CD4-positive, alpha-beta T cell (primary cell): ENCODE measurements at regions of chr7 and their contacts with region 1.

Region 1: GRCh38 chr7:152675759-152676636 is at the start of gene XRCC2:
- DNase-seq: peak; percentile 87 to 98 (median 95)
- ATAC-seq: peak; percentile 94
- H3K4me3 ChIP-seq: peak within 1 kb of the TSS; percentile 73
- H3K4me3 Mint-ChIP-seq: peak within 1 kb of the TSS; percentile 92
- H3K27ac ChIP-seq: peak within 1 kb of the TSS; percentile 13 to 83
- H3K27ac Mint-ChIP-seq: peak within 1 kb of the TSS; percentile 73
- H3K4me1 ChIP-seq: peaks cover 14% of the 10 kb centered on the region
- H3K4me1 Mint-ChIP-seq: peaks cover 10% of the 10 kb centered on the region
- H3K27me3 ChIP-seq: no peaks in the 10 kb centered on the region
- H3K27me3 Mint-ChIP-seq: no peaks in the 10 kb centered on the region
- CTCF ChIP-seq: no peak
- total RNA-seq, gene XRCC2: 0.25 to 0.41 TPM

Region 2: GRCh38 chr7:151341357-151342101 is 1334.5 kb before region 1 on chr7 and contains the start of gene NUB1:
- CTCF ChIA-PET with region 1: no interaction called
- POLR2A ChIA-PET with region 1: no interaction called
- intact Hi-C with region 1: loop called in 1 of 2 experiments (anchors 10 kb)
- DNase-seq: peak; percentile 81 to 98 (median 90)
- ATAC-seq: peak; percentile 90
- H3K4me3 ChIP-seq: peak within 1 kb of the TSS; percentile 88
- H3K4me3 Mint-ChIP-seq: peak within 1 kb of the TSS; percentile 93
- H3K27ac ChIP-seq: peak within 1 kb of the TSS; percentile 55 to 88
- H3K27ac Mint-ChIP-seq: peak within 1 kb of the TSS; percentile 92
- H3K4me1 ChIP-seq: peaks cover 34% of the 10 kb centered on the region
- H3K4me1 Mint-ChIP-seq: peaks cover 49% of the 10 kb centered on the region
- H3K27me3 ChIP-seq: no peaks in the 10 kb centered on the region
- H3K27me3 Mint-ChIP-seq: no peaks in the 10 kb centered on the region
- CTCF ChIP-seq: no peak
- total RNA-seq, gene NUB1: 86.0 to 90.4 TPM

Region 3: DNA sequence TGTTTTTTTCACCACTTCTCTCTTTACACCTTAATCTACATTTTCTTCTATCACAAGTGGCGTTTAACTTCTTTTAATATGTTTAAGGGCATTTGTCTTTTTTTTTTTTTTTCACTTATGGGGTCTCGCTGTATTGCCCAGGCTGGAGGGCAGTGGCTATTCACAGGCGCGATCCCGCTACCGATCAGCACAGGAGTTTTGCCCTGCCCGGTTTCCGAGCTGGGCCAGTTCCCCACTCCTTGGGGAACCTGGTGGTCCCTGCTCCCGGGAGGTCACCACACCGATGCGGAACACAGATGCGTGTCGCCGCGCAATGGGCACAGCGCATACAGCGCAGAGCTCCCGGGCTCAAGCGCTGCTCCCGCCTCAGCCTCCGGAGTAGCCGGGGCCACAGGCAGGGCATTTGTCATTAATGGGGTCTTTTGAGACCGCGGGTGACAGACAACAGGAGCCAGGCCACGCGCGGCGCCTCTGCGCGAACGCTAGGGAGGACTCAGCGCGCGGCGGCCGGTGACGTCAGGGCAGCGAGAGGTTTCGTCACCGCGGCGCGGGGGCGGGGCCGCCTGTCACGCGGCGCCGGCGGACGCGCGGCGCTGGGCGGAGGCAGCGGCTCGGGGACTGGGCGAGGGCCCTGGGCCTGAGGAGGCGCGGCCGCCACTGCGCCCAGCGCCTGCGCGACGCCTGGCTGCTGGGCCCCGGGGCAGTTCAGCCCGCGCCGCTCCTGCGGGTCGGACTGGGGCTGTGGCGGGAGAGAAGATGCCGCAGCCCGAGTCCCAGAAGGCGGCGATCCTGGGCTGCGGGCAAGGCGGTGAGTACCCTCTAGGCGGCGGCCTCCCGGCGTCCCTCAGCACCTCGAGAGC is 650.7 kb before region 1 on chr7 and contains the start of gene GALNT11:
- CTCF ChIA-PET with region 1: no interaction called
- POLR2A ChIA-PET with region 1: no interaction called
- intact Hi-C with region 1: loop called in 1 of 2 experiments (anchors 5 kb)
- DNase-seq: peak; percentile 72 to 96 (median 82)
- ATAC-seq: peak; percentile 92
- H3K4me3 ChIP-seq: peak within 1 kb of the TSS; percentile 96
- H3K4me3 Mint-ChIP-seq: peak within 1 kb of the TSS; percentile 96
- H3K27ac ChIP-seq: peak within 1 kb of the TSS in 1 of 2 donors; percentile 82
- H3K27ac Mint-ChIP-seq: peak within 1 kb of the TSS; percentile 96
- H3K4me1 ChIP-seq: peaks cover 30% of the 10 kb centered on the region
- H3K4me1 Mint-ChIP-seq: peaks cover 42% of the 10 kb centered on the region
- H3K27me3 ChIP-seq: no peaks in the 10 kb centered on the region
- H3K27me3 Mint-ChIP-seq: no peaks in the 10 kb centered on the region
- CTCF ChIP-seq: no peak
- total RNA-seq, gene GALNT11: 20.7 to 22.2 TPM

Region 4: GRCh38 chr7:152430854-152431253 is 245.1 kb before region 1 on chr7:
- CTCF ChIA-PET with region 1: no interaction called
- POLR2A ChIA-PET with region 1: no interaction called
- intact Hi-C with region 1: loop called (anchors 5 to 10 kb)
- DNase-seq: no peak
- ATAC-seq: no peak
- H3K4me3 ChIP-seq: no peak overlapping the region
- H3K4me3 Mint-ChIP-seq: peak overlapping the region; percentile 62
- H3K27ac ChIP-seq: no peak overlapping the region
- H3K27ac Mint-ChIP-seq: no peak overlapping the region
- H3K4me1 ChIP-seq: peaks cover 31% of the 10 kb centered on the region
- H3K4me1 Mint-ChIP-seq: peaks cover 56% of the 10 kb centered on the region
- H3K27me3 ChIP-seq: no peaks in the 10 kb centered on the region
- H3K27me3 Mint-ChIP-seq: no peaks in the 10 kb centered on the region
- CTCF ChIP-seq: no peak

Region 5: DNA sequence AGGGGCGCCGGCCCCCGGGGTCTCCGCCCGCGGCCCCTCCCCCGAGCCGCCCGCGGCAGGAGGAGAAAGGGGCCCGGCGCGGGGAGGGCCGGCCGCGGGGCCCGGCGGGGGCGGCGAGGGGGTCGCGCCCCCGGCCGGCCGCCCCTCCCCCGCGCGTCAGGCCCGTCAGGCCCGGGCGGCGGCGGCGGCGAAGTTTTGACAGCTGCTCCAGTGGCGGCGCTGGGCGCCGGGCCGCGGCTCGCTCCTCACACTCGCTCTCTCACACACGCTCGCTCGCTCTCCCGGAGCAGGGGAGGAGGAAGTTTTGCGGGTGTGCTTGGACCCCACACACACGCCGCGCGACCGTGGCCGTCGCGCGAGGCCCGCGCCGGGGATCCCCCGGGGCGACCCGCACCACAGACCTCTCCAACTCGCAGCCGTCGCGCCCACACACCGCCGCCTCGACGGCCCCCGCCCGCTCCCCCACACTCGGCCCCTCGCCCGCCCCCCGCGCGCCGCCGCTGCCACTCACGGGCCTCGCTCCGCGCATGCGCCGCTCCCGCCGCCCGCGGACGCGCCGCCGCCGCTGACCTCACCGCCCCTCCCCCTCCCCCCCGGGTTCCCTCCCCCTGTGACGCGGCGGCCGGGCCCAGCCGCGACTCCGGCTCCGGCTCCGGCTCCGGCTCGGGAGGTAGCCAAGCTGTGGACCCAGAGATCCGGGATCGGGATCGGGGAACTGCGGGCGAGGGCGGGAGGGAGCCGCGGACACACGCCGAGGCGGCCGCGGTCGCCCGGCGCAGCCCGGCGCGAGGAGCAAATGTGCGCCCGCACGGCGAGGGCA is 239.7 kb before region 1 on chr7:
- CTCF ChIA-PET with region 1: no interaction called
- POLR2A ChIA-PET with region 1: no interaction called
- intact Hi-C with region 1: loop called (anchors 5 to 10 kb)
- DNase-seq: peak; percentile 82 to 97 (median 88)
- ATAC-seq: peak; percentile 66
- H3K4me3 ChIP-seq: peak overlapping the region; percentile 62
- H3K4me3 Mint-ChIP-seq: peak overlapping the region; percentile 91
- H3K27ac ChIP-seq: peak overlapping the region; percentile 86 to 92
- H3K27ac Mint-ChIP-seq: peak overlapping the region; percentile 93
- H3K4me1 ChIP-seq: peaks cover 5% of the 10 kb centered on the region
- H3K4me1 Mint-ChIP-seq: peaks cover 29% of the 10 kb centered on the region
- H3K27me3 ChIP-seq: no peaks in the 10 kb centered on the region
- H3K27me3 Mint-ChIP-seq: no peaks in the 10 kb centered on the region
- CTCF ChIP-seq: no peak

Region 6: GRCh38 chr7:152463709-152464311 is 212.2 kb before region 1 on chr7:
- CTCF ChIA-PET with region 1: no interaction called
- POLR2A ChIA-PET with region 1: no interaction called
- intact Hi-C with region 1: loop called (anchors 2 to 10 kb)
- DNase-seq: peak; percentile 99 to 100 (median 100)
- ATAC-seq: peak; percentile 91
- H3K4me3 ChIP-seq: peak overlapping the region; percentile 93
- H3K4me3 Mint-ChIP-seq: peak overlapping the region; percentile 93
- H3K27ac ChIP-seq: peak overlapping the region; percentile 76 to 93
- H3K27ac Mint-ChIP-seq: peak overlapping the region; percentile 74
- H3K4me1 ChIP-seq: peaks cover 10% of the 10 kb centered on the region
- H3K4me1 Mint-ChIP-seq: peaks cover 6% of the 10 kb centered on the region
- H3K27me3 ChIP-seq: no peaks in the 10 kb centered on the region
- H3K27me3 Mint-ChIP-seq: no peaks in the 10 kb centered on the region
- CTCF ChIP-seq: no peak

Region 7: DNA sequence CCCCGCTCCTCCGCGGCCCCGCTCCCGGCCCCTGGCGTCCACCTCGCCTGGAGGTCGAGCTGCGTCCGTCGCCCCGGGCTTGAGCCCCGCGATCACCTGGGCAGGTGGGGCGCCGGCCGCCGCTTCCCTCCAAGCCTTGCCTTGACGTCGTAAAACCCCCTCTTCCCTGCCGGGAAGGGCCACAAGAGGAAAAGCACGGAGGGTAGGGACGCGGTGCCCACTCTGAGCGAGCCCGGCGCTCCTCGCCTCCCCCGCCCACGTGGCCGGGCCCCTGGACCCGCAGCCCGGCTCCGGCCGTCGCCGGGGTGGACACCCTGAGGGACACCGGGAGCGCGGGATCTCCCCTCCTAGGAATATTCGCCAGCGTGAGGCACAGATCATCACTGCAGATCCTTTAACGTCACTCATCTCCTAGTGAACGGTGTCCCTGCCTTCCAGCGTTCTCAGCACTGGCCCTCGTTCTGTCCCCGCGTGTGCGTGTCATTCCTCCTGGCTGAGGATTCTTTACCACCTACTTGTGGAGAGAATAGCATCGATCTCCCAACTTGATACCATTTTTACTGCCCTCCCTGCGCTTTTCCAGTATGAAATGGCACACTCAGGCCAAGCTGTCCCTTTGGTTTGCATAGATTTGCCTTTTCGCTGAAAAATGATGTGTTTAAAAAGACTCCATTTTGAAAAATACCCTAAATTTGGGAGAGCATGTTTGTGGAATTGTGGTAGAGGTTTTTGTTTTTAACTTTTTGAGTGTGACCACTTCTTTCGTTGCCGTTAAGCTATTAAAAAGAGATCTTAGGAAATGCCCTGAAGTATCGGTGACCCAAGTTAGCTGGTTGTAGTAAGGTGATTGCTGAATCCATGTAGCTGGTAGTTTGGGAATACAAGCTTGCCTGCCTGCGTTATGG is 84.2 kb after region 1 on chr7:
- CTCF ChIA-PET with region 1: no interaction called
- POLR2A ChIA-PET with region 1: no interaction called
- intact Hi-C with region 1: loop called in 1 of 2 experiments (anchors 2 kb)
- DNase-seq: peak in 10 of 14 experiments; percentile 1 to 50 (median 7)
- ATAC-seq: peak; percentile 23
- H3K4me3 ChIP-seq: peak overlapping the region; percentile 74
- H3K4me3 Mint-ChIP-seq: peak overlapping the region; percentile 92
- H3K27ac ChIP-seq: peak overlapping the region in 1 of 2 donors; percentile 70
- H3K27ac Mint-ChIP-seq: peak overlapping the region; percentile 78
- H3K4me1 ChIP-seq: peaks cover 16% of the 10 kb centered on the region
- H3K4me1 Mint-ChIP-seq: peaks cover 21% of the 10 kb centered on the region
- H3K27me3 ChIP-seq: no peaks in the 10 kb centered on the region
- H3K27me3 Mint-ChIP-seq: no peaks in the 10 kb centered on the region
- CTCF ChIP-seq: no peak